Spleen (tissue), 13 donors: ENCODE measurements at regions of chr12 and their contacts with region 1.

Region 1: DNA sequence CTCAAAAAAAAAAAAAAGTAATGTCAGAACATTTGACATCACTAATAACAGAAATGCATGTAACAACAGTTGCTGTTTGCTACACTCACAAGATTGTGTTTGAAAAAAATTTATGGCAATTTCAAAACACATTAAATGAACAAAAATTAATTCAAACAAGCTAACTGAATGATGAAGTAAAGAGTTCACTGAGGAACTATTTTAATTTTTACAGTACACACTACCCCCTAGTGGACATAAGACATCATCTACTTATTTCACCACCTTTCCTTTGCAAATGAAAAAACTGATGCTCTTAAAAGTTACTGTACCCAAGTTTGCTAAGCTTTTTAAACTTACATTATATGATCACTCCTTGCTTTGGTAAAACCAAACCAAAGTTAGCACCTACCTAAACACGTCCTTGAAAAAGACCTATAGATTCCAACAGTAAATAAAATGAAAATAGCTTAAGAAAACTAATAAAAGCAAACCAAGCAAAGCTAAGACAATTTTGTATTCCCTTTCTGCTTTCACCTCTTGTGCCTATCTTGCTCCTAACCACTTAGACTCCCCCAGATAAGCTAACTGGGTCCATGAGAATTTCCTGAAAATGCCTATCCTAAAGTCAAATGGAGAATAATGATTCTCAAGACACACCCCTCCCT is 22.2 kb downstream of the UBE2N start:
- DNase-seq: no peak
- H3K4me3 ChIP-seq: peak overlapping the region in 1 of 8 donors; percentile 25
- H3K27ac ChIP-seq: no peak overlapping the region
- H3K4me1 ChIP-seq: peaks cover 39 to 99% (median 77%) of the 10 kb centered on the region in 6 donors
- H3K27me3 ChIP-seq: no peaks in the 10 kb centered on the region
- CTCF ChIP-seq: peak; percentile 39 to 79 (median 69)
- POLR2A ChIP-seq: no peak

Region 2: DNA sequence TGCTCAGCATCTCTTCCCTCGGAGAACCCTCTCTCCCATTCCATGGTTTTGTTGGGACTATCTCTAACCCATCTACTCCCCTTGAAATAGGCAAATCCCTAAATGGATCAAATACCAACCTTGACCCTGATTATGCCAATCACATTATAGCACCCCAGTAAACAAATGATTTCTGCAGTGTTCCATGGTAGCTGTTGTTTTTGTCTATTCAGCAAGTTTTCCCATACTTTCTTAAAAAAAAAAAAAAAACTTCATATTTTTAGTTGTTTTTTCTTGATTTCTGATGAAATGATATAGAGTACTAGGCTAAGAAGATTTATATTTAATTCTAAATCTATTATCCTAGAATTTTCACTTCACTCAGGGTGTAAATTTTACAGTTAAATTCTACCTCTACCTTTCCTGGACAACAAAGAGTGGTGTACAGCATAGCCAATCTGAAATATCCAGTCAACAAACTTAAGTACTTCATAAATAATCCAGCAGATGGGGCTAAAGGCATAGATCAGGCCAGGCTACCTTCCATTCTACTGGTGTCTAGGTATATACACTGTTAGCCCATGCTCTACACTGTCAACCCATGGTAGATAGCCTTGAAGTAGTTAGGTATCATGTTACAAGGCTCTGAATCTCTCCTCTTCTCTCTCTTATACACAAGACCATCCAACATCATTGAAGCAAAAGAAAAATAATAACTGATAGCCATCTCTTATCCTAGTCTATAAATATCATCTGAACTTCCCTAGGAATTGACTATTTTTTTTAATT is 634.5 kb before region 1 on chr12:
- intact Hi-C with region 1: loop called (anchors 10 kb)
- DNase-seq: no peak
- H3K4me3 ChIP-seq: no peak overlapping the region
- H3K27ac ChIP-seq: no peak overlapping the region
- H3K4me1 ChIP-seq: peaks cover 0 to 12% (median 0%) of the 10 kb centered on the region in 6 donors
- H3K27me3 ChIP-seq: no peaks in the 10 kb centered on the region
- CTCF ChIP-seq: peak in 9 of 11 experiments; percentile 19 to 61 (median 57)
- POLR2A ChIP-seq: no peak

Region 3: GRCh38 chr12:92995258-92995903 is 424.1 kb before region 1 on chr12:
- intact Hi-C with region 1: loop called (anchors 10 kb)
- DNase-seq: no peak
- H3K4me3 ChIP-seq: no peak overlapping the region
- H3K27ac ChIP-seq: peak overlapping the region in 4 of 8 donors; percentile 9 to 42 (median 28)
- H3K4me1 ChIP-seq: peaks cover 0 to 10% (median 1%) of the 10 kb centered on the region in 6 donors
- H3K27me3 ChIP-seq: no peaks in the 10 kb centered on the region
- CTCF ChIP-seq: no peak
- POLR2A ChIP-seq: no peak

Region 4: GRCh38 chr12:93198086-93198485 is 221.4 kb before region 1 on chr12:
- intact Hi-C with region 1: no loop called
- DNase-seq: no peak
- H3K4me3 ChIP-seq: no peak overlapping the region
- H3K27ac ChIP-seq: no peak overlapping the region
- H3K4me1 ChIP-seq: peaks cover 0 to 9% (median 0%) of the 10 kb centered on the region in 6 donors
- H3K27me3 ChIP-seq: no peaks in the 10 kb centered on the region
- CTCF ChIP-seq: no peak
- POLR2A ChIP-seq: no peak